ENCODE measurements at regions of chr19 and their contacts with region 1.

Region 1: GRCh38 chr19:4409123-4409933 is 6.9 kb downstream of the CHAF1A start:
- DNase-seq: no peak
- H3K4me3 ChIP-seq: no peak overlapping the region
- H3K27ac ChIP-seq: no peak overlapping the region
- H3K27me3 ChIP-seq: no peaks in the 10 kb centered on the region
- CTCF ChIP-seq: no peak

Region 2: DNA sequence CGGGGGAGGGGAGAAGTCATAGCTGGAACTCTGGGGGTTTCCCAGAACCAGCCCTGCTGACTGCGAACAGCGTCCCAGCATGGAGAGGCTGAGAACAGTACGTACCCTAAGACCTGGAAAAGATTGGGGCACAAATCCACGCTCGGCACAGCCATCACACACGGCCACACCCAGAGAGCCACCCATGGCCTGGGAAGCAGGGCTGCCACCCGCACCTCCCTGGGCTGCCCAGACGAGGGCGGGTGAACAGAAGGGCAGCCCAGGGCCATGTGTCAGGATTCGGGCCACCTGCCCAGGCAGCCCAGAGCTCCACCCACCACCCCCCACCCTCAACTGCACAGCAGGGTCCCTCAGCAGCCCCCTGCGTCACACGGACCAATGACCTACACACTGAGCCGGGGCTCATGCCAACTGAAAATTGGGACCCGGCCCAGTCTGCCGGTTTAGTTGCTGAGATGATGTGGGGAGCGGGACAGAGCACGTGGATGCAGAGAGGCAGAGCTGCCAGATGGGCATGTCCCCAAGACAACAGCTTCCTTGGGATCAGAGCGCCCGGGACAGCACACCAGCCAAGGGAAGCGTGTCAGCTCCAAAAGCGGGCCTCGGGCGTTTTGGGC is 39.8 kb after region 1 on chr19:
- intact Hi-C with region 1: loop called in 1 of 2 experiments (anchors 5 kb)
- DNase-seq: peak; percentile 54 to 87 (median 80)
- H3K4me3 ChIP-seq: peak overlapping the region in 5 of 59 donors; percentile 2 to 27 (median 16)
- H3K27ac ChIP-seq: peak overlapping the region in 58 of 59 donors; percentile 19 to 90 (median 72)
- H3K27me3 ChIP-seq: no peaks in the 10 kb centered on the region
- CTCF ChIP-seq: peak in 4 of 56 donors; percentile 9 to 26 (median 12)